ENCODE measurements at regions of chr11 and their contacts with region 1.

Region 1: DNA sequence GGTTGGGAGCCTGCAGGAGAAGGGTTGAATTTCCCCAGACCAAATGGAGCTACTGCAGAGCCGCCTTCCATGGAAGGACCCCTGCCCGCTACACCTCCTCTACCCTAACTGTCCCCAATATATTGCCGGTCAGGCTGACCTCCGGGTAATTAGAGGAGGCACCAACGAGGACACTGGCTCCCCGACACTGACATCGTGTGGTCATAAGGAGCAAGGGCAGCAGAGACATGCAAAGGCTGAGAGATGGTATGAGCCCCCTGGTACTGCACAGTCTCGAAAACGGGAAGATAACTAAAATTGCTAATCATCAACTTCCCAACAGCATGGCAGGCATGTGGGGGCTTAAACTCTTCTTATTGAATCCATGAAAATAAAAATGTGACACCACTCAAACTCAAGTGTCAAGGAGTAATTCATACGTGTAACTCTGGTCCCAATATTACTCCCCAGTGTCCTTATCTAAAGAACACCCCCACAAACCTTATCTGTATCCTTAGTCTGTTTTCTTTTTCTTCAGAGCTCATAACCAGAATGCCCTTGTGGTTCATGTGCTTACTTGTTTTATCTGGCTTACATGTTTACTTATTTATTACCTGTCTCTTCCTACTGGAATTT is 4.4 kb downstream of the CAVIN3 start:
- DNase-seq: peak; percentile 63 to 85 (median 78)
- ATAC-seq: peak; percentile 15 to 16
- H3K4me3 ChIP-seq: no peak overlapping the region
- H3K27ac ChIP-seq: no peak overlapping the region
- H3K4me1 ChIP-seq: no peaks in the 10 kb centered on the region
- H3K27me3 ChIP-seq: no peaks in the 10 kb centered on the region

Region 2: GRCh38 chr11:6022956-6023355 is 293.0 kb before region 1 on chr11:
- intact Hi-C with region 1: loop called in 1 of 4 experiments (anchors 10 kb)
- DNase-seq: no peak
- ATAC-seq: peak; percentile 74 to 78
- H3K4me3 ChIP-seq: no peak overlapping the region
- H3K27ac ChIP-seq: no peak overlapping the region
- H3K4me1 ChIP-seq: no peaks in the 10 kb centered on the region
- H3K27me3 ChIP-seq: no peaks in the 10 kb centered on the region

Region 3: GRCh38 chr11:6219359-6219758 is 96.6 kb before region 1 on chr11:
- intact Hi-C with region 1: no loop called
- DNase-seq: peak in 1 of 3 donors; percentile 37
- ATAC-seq: peak; percentile 83 to 96
- H3K4me3 ChIP-seq: no peak overlapping the region
- H3K27ac ChIP-seq: no peak overlapping the region
- H3K4me1 ChIP-seq: peaks cover 5% of the 10 kb centered on the region
- H3K27me3 ChIP-seq: no peaks in the 10 kb centered on the region

Region 4: GRCh38 chr11:6249784-6250555 is 65.9 kb before region 1 on chr11:
- intact Hi-C with region 1: loop called in 1 of 4 experiments (anchors 5 kb)
- DNase-seq: peak; percentile 85 to 91 (median 91)
- ATAC-seq: peak; percentile 83 to 85
- H3K4me3 ChIP-seq: no peak overlapping the region
- H3K27ac ChIP-seq: peak overlapping the region; percentile 12
- H3K4me1 ChIP-seq: peaks cover 4% of the 10 kb centered on the region
- H3K27me3 ChIP-seq: no peaks in the 10 kb centered on the region

Region 5: GRCh38 chr11:6353367-6353987 is 37.6 kb after region 1 on chr11:
- intact Hi-C with region 1: loop called in 1 of 4 experiments (anchors 5 kb)
- DNase-seq: peak; percentile 35 to 66 (median 57)
- ATAC-seq: peak; percentile 55 to 72
- H3K4me3 ChIP-seq: no peak overlapping the region
- H3K27ac ChIP-seq: no peak overlapping the region
- H3K4me1 ChIP-seq: no peaks in the 10 kb centered on the region
- H3K27me3 ChIP-seq: no peaks in the 10 kb centered on the region

Region 6: GRCh38 chr11:6682936-6683861 is 367.3 kb after region 1 on chr11 and contains the start of gene MRPL17:
- intact Hi-C with region 1: no loop called
- DNase-seq: peak; percentile 99 to 100 (median 99)
- ATAC-seq: peak; percentile 97 to 98
- H3K4me3 ChIP-seq: peak within 1 kb of the TSS; percentile 56
- H3K27ac ChIP-seq: peak within 1 kb of the TSS; percentile 76
- H3K4me1 ChIP-seq: no peaks in the 10 kb centered on the region
- H3K27me3 ChIP-seq: no peaks in the 10 kb centered on the region
- total RNA-seq, gene MRPL17: 36.7 to 45.1 (median 41.9) TPM

Measured in right cardiac atrium (tissue), 5 donors.